Caki2 (cell line): ENCODE measurements at regions of chr7 and their contacts with region 1.

Region 1: GRCh38 chr7:107168233-107169119 is at the start of gene HBP1:
- DNase-seq: peak; percentile 100
- total RNA-seq, gene HBP1: 44.4 and 47.3 TPM in 2 replicates

Region 2: GRCh38 chr7:106793015-106793975 is 375.2 kb before region 1 on chr7:
- in situ Hi-C with region 1: loop called (anchors 25 kb)
- DNase-seq: peak; percentile 31